ENCODE measurements at regions of chr2 and their contacts with region 1.

Region 1: GRCh38 chr2:63218800-63219526 is 168.3 kb downstream of the OTX1 start:
- DNase-seq: no peak
- H3K4me3 ChIP-seq: no peak overlapping the region
- H3K27ac ChIP-seq: no peak overlapping the region
- H3K4me1 ChIP-seq: no peaks in the 10 kb centered on the region
- H3K27me3 ChIP-seq: no peaks in the 10 kb centered on the region
- CTCF ChIP-seq: no peak
- POLR2A ChIP-seq: no peak

Region 2: DNA sequence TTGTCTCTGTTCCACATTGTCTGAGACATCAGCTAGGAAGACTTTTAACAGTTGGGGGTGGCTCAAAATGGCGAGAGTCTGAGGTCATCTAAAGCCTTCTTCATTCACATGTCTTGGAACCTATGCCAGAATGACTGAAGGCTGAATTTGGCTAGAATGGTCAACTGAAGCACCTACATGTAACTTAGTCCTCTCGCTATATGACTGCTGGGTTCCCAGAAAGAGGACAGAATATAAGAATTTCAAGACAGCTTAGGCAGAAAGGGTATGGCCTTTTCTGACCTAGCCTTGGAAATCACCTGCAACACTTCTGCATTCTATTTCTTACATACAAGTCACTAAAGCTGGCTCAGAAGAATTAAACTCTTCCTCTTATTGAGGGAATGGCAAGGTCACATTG is 244.0 kb before region 1 on chr2:
- intact Hi-C with region 1: loop called (anchors 5 kb)
- DNase-seq: no peak
- H3K4me3 ChIP-seq: no peak overlapping the region
- H3K27ac ChIP-seq: no peak overlapping the region
- H3K4me1 ChIP-seq: no peaks in the 10 kb centered on the region
- H3K27me3 ChIP-seq: no peaks in the 10 kb centered on the region
- CTCF ChIP-seq: no peak
- POLR2A ChIP-seq: no peak